Endothelial cell of umbilical vein (primary cell): ENCODE measurements at regions of chr15 and their contacts with region 1.

Region 1: DNA sequence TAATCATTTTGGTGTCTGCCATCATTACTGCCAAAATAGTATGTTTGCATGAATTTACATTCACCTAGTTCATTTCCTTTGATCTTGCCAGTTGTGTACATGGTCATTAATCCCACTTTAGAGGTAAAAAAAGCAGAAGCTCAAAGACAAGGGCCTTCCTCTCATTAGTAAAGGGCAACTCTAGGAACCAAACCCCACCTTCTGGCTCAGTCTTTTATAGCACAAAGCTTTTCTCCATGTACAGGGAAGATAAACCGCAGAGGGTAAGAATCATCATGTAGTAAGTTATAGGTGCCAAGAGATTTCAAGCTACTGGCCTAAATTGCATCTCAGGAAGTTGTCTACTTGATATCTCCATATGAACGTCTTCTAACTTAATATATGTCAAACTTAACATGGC is 19.3 kb upstream of the SPG21 start:
- DNase-seq: no peak
- H3K4me3 ChIP-seq: no peak overlapping the region
- H3K27ac ChIP-seq: no peak overlapping the region
- H3K4me1 ChIP-seq: no peaks in the 10 kb centered on the region
- H3K27me3 ChIP-seq: no peaks in the 10 kb centered on the region
- CTCF ChIP-seq: no peak
- POLR2A ChIP-seq: no peak

Region 2: DNA sequence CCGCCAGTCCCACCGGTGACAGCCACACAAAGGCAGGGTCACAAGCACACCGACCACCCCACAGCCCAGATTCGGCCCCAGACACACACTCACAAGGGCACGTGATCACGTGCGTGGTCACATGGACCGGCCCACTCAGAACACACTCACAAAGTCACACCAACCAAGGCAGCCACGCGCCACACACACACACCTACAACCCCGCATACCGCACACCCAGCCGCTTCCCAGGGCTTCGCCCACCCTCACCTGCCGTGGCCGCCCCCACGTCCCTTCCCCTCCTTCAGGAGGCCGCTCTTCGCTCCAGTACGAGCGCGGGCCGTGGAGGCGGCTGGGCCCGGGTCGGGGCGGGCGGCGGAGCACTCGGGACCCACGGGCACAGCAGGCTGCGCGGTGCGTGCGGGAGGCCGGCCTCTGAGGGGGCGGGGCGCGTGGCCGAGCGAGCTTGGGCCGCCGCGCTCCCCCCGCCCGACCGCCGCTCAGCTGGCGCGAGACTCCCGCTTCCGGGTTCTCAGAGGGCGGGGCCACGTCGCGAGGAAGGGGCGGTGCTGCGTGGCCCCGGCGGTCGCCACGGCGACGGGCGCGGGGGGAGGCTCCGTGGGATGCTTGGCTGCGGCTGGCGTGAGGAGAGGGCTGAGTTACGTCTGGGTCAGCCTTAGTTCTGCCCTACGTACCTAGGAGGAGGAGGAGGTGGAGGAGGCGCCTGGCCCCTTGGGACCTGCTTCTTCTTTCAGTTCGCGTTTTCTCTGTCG is 19.4 kb before region 1 on chr15 and contains the start of gene SPG21:
- CTCF ChIA-PET with region 1: interaction called, 3 read pairs
- POLR2A ChIA-PET with region 1: interaction called, 14 read pairs
- dilution Hi-C with region 1: no loop called
- intact Hi-C with region 1: no loop called
- DNase-seq: peak; percentile 97
- H3K4me3 ChIP-seq: peak within 1 kb of the TSS; percentile 93 to 99 (median 94)
- H3K27ac ChIP-seq: peak within 1 kb of the TSS; percentile 97
- H3K4me1 ChIP-seq: peaks cover 27% of the 10 kb centered on the region
- H3K27me3 ChIP-seq: no peaks in the 10 kb centered on the region
- CTCF ChIP-seq: no peak
- POLR2A ChIP-seq: peak; percentile 89
- total RNA-seq, gene SPG21: 75.3 and 82.5 TPM in 2 replicates

Region 3: DNA sequence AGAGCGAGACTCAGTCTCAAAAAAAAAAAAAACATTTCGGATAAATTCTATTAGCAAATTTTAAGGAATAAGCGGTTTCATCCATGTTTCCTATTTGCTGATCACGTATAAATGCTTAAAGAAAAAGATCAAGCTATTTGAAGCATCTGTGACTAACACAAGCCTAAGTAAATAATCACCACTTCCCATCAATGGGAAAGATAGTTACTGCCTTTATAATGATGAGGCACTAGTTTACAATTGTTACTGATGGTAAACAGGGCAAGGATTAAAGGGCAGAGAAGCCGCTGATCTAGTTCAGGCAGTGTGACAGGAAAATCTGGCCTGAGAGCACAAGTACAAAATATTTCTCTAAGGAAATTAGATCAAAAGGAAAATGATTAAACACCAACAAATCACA is 162.4 kb after region 1 on chr15:
- CTCF ChIA-PET with region 1: no interaction called
- POLR2A ChIA-PET with region 1: no interaction called
- dilution Hi-C with region 1: no loop called
- intact Hi-C with region 1: no loop called
- DNase-seq: no peak
- H3K4me3 ChIP-seq: no peak overlapping the region
- H3K27ac ChIP-seq: no peak overlapping the region
- H3K4me1 ChIP-seq: no peaks in the 10 kb centered on the region
- H3K27me3 ChIP-seq: no peaks in the 10 kb centered on the region
- CTCF ChIP-seq: no peak
- POLR2A ChIP-seq: no peak